GM10248 (cell line): ENCODE measurements at regions of chr17 and their contacts with region 1.

Region 1: DNA sequence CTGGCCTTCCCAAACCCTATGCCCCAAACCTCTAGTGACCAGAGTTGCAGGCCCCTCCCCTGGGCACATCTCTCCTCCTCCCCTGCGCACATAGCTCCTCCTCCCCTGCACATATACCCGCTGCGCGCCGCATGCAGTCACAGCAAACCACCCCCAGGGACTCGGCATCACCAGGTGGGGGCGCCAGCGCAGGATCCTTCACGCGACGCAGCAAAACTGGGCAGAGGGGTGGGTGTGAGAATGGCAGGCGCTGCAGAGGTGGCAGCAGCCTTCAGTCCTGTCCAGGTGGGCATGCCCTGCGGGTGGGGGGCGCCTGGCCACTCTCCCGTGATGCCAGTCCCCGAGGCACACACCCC is 5.6 kb downstream of the CORO6 start:
- DNase-seq: peak; percentile 90
- CTCF ChIP-seq: peak; percentile 92

Region 2: GRCh38 chr17:29495011-29495410 is 122.1 kb before region 1 on chr17:
- CTCF ChIA-PET with region 1: no interaction called
- POLR2A ChIA-PET with region 1: no interaction called
- DNase-seq: no peak
- CTCF ChIP-seq: no peak

Region 3: GRCh38 chr17:29579866-29580771 is 37.0 kb before region 1 on chr17:
- CTCF ChIA-PET with region 1: interaction called, 172 read pairs
- POLR2A ChIA-PET with region 1: no interaction called
- DNase-seq: peak; percentile 91
- CTCF ChIP-seq: peak; percentile 93

Region 4: GRCh38 chr17:29603109-29603674 is 13.9 kb before region 1 on chr17:
- CTCF ChIA-PET with region 1: interaction called, 58 read pairs
- POLR2A ChIA-PET with region 1: interaction called, 4 read pairs
- DNase-seq: no peak
- CTCF ChIP-seq: no peak

Region 5: DNA sequence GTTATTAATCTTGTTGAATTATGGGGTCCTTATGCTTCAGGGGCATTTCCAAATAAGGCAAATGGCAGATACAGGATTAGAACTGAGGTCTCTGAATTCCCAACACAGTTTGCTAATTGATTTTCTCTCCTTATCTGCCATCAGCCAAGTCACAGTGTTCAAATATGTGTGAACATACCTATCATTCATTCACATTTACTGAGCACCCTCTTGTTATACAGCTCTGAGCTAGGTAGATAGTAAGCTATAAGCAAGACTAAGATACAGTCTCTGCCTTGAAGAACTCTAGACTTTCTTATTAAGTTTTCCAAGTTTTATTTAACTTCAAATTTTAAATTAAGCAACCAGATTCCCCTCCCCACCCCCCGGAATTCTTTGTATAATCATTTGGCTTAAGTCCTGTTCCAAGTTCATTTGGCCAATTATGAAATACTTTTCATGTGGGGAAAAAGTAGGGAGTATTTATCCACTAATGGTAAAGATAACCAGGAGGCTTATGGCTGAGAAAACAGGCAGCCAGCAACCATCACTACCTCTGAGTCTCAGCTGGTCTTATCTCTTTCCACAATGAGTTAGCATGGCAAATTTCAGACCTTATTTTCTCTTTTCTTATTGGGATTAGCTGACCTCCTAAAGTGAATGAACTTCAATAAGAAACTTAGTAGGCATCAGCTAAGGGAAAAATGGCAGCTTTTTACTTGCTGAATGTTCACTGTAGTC is 37.1 kb after region 1 on chr17:
- CTCF ChIA-PET with region 1: interaction called, 21 read pairs
- POLR2A ChIA-PET with region 1: no interaction called
- DNase-seq: no peak
- CTCF ChIP-seq: no peak

Region 6: DNA sequence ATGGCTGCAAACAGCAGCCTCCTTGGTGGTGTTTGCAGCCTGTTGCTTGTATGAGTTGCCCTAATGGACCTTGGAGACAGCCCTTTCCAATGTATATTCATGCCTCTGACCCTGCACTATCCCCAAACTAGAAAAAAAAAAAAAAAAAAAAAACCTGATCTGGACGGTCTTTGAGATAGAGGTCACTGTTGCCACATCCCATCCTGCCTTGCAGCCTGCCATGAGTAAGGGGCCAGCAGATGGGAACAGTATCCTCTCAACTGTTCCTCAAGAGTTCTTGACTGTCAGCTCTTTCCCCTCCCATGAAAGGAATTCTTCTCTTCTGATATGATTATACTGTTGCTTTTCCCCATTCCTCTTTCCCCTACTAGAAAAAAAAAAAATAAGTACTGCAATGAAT is 160.6 kb after region 1 on chr17:
- CTCF ChIA-PET with region 1: interaction called, 71 read pairs
- POLR2A ChIA-PET with region 1: no interaction called
- DNase-seq: no peak
- CTCF ChIP-seq: no peak

Region 7: GRCh38 chr17:30093463-30094147 is 476.5 kb after region 1 on chr17:
- CTCF ChIA-PET with region 1: interaction called, 10 read pairs
- POLR2A ChIA-PET with region 1: no interaction called
- DNase-seq: peak; percentile 72
- CTCF ChIP-seq: peak; percentile 79